SK-N-SH (cell line): ENCODE measurements at regions of chr6 and their contacts with region 1.

Region 1: DNA sequence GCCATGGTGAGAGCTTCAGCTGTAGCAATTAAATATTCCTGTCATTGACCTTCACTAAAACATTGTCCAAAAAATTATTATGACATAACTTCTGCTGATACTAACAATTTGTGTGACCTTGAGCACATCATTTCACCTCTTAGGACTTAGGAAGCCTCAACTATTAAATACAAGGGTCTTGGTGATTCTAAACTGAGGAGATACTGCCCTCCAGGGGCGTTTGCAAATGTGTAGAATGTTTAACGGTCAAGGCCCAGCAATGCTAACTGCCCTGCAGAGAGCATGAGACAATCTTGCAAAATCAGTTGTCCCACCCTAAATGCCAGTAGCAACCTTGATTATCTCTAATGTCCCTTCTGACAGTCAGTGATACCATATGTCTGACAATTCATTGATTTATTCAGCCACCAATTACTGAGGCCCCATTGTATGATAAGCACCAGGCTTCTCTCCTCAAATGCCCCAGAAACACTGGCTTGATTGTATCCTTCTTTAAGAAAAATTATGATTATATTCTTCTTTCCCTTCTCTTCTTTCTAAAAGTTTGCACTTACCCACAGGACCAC is 284.1 kb upstream of the PLN start:
- DNase-seq: peak; percentile 30
- H3K4me3 ChIP-seq: peak overlapping the region in 1 of 2 experiments; percentile 29; a peak in 1 of 4 replicates
- H3K27ac ChIP-seq: no peak overlapping the region
- H3K4me1 ChIP-seq: no peaks in the 10 kb centered on the region; a peak in 1 of 4 replicates
- H3K27me3 ChIP-seq: no peaks in the 10 kb centered on the region
- CTCF ChIP-seq: peak; percentile 36; the same call in 1 of the 2 replicates
- EP300 ChIP-seq: no peak
- RAD21 ChIP-seq: peak; percentile 70

Region 2: GRCh38 chr6:117976030-117976651 is 287.9 kb before region 1 on chr6:
- CTCF ChIA-PET with region 1: interaction called, 18 read pairs
- POLR2A ChIA-PET with region 1: no interaction called
- DNase-seq: peak; percentile 34
- H3K4me3 ChIP-seq: no peak overlapping the region; a peak in 1 of 4 replicates
- H3K27ac ChIP-seq: no peak overlapping the region
- H3K4me1 ChIP-seq: no peaks in the 10 kb centered on the region; a peak in 1 of 4 replicates
- H3K27me3 ChIP-seq: no peaks in the 10 kb centered on the region
- CTCF ChIP-seq: peak; percentile 79
- EP300 ChIP-seq: no peak
- RAD21 ChIP-seq: peak; percentile 67